Colonic mucosa (tissue), 4 donors: ENCODE measurements at regions of chr2 and their contacts with region 1.

Region 1: GRCh38 chr2:156589381-156590079 is 153.4 kb downstream of the GPD2 start:
- DNase-seq: no peak
- H3K4me3 ChIP-seq: no peak overlapping the region
- H3K27ac ChIP-seq: no peak overlapping the region
- H3K4me1 ChIP-seq: no peaks in the 10 kb centered on the region
- H3K27me3 ChIP-seq: no peaks in the 10 kb centered on the region
- CTCF ChIP-seq: peak; percentile 31

Region 2: GRCh38 chr2:155377266-155377680 is 1212.3 kb before region 1 on chr2:
- intact Hi-C with region 1: loop called (anchors 10 kb)
- DNase-seq: no peak
- H3K4me3 ChIP-seq: no peak overlapping the region
- H3K27ac ChIP-seq: no peak overlapping the region
- H3K4me1 ChIP-seq: no peaks in the 10 kb centered on the region
- H3K27me3 ChIP-seq: no peaks in the 10 kb centered on the region
- CTCF ChIP-seq: peak; percentile 19

Region 3: DNA sequence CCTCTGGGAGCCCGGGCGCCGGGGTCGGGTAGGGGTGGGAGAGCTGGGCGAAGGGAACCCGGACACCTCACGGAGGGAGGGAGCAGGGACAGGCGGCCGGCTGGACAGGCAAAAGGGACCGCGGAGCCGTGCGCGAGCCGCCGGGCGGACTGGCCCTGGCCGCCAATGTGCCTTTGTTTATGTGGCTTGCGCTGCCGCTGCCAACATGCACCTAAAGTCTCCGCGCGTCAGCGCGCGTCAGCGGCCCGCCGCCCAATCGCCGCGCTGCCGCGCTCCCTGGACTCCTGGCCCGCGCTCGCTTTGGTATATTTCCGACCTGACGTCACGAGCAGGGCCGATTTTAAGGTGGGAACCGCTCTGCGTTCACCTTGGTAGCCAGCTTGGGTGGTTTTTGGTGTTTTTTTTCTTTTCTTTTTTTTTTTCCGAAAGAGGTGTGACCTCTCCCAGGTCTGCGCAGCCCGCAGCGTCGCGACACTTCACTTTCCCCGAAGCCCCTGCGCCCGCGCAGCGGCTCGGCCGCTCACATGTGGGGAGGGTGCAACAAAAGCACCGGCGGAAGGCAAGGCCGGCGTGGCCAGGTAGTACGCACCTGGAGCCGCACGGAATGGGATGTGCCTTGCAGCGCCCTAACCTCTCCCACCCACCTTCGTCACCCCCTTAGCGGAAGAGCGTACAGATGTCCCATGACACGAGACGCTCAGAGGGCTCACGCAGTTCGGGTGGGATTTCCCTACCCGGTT is 256.8 kb before region 1 on chr2 and contains the start of gene NR4A2:
- intact Hi-C with region 1: loop called (anchors 10 kb)
- DNase-seq: peak; percentile 95
- H3K4me3 ChIP-seq: peak within 1 kb of the TSS; percentile 72
- H3K27ac ChIP-seq: peak within 1 kb of the TSS; percentile 98
- H3K4me1 ChIP-seq: no peaks in the 10 kb centered on the region
- H3K27me3 ChIP-seq: no peaks in the 10 kb centered on the region
- CTCF ChIP-seq: no peak
- total RNA-seq, gene NR4A2: 2.6 to 4.7 TPM

Region 4: DNA sequence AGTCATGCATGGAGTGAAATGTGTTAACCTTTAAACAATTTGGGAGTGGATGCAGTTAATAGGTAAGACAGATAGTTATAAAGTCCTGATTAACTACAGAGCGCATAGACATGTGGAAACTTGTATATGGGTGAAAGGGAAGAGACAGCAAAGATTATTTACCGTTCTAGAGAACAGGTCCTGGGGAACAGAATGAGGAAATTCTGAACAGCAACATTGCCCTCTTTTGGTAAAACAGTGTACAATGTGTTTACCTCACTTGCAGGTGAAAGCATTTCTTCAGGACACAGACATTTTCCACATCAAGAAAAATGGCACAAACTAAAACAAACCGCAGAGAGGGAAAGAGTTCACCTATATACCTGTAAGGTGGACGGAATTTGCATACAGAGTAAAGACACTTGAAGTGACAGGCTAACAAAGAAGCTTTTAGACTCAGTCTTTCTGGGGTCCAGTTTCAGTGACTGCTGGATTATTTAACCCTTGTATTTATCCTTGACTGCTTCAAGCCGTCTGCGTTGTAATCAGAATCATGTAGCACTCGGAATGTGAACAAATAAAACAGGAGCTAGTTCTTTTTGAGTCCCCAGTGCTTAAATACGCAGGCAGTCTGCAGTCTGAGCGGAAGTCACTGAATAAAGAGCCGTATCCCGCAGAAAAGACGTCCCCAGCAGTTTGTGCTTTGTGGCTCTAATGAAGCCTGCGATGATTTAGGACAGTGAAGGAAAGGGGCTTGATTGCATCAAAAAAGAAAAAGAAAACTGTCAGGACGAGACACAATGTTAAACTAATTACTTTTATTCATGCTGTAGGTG is 303.1 kb after region 1 on chr2:
- intact Hi-C with region 1: loop called (anchors 10 kb)
- DNase-seq: no peak
- H3K4me3 ChIP-seq: peak overlapping the region; percentile 30
- H3K27ac ChIP-seq: no peak overlapping the region
- H3K4me1 ChIP-seq: no peaks in the 10 kb centered on the region
- H3K27me3 ChIP-seq: no peaks in the 10 kb centered on the region
- CTCF ChIP-seq: peak; percentile 36

Region 5: DNA sequence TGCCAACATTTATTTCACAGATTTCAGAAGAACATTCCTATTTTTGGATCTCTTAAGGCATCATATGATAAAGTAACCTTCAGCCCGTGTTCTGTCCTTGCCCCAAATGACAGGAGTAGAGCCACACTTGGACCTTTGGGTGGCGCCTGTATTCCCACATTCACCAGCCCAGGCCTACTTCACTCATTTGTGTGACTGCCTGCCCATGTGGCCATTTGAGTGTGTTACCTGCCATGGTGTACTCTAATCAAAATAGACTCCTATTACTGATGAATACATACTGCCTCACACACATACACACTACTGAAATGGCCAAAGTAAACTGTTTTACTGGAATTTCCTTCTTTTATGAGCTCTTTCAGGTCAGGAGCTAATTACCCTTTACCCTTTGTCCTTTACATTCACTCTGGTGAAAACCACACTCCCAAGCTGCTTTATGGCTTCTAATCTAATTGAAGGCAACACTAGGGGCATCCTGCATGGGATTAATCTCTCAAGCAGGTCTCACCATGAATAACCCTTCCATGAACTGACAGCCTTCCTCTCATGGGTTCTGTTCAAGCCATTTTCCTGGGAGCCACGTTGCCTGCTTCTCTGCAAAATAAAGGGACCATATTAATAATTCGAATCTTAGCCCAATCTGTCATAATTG is 396.9 kb after region 1 on chr2:
- intact Hi-C with region 1: no loop called
- DNase-seq: no peak
- H3K4me3 ChIP-seq: no peak overlapping the region
- H3K27ac ChIP-seq: no peak overlapping the region
- H3K4me1 ChIP-seq: no peaks in the 10 kb centered on the region
- H3K27me3 ChIP-seq: no peaks in the 10 kb centered on the region
- CTCF ChIP-seq: no peak